ENCODE measurements at regions of chr9 and their contacts with region 1.

Region 1: DNA sequence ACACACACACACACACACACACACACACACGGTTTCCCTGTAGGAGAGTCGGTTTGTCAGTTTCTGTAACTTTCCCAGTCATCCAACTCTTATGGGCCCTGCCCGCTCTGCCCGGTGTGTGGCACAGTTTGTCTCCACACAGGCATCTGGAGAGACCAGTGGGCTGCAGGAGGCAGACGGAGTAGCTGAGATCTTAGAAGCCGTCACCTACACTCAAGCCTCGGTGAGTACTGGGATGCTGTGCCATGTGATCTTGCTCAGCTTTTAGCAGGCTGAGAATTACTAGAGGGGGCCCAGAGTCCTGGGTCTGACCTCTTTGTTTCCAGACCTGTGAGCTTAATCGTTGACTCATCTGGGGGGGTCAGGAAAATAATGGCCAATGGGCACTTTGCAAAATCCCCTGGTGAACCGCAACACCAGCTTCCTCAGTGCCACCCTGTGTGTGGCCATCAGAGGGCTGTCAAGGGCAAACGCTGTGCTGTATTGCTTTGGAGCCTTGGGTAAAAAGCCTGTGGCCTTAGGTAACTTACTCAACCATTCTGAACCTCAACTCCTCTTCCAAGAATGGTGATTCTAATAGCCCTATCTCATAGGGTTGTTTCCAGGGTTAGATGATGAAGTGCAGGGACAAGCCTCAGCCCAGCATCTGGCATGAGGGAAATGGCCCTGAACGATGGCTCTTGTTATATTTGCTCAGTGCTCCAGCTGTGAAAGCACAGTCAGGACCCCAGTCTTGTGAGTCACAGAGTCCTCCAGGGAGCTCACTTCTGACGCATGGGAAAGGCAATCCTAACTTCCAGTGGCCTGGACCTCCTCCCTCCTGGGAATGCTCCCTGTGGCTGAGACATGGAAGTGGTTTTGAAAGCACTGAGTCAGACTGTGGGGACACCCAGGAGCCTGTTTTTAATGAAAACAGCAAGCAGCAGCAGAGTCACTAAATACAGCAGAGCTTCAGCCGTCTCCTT is 45.6 kb downstream of the COL15A1 start:
- DNase-seq: no peak
- H3K4me3 ChIP-seq: no peak overlapping the region
- H3K27ac ChIP-seq: no peak overlapping the region
- H3K4me1 ChIP-seq: no peaks in the 10 kb centered on the region
- H3K27me3 ChIP-seq: no peaks in the 10 kb centered on the region
- CTCF ChIP-seq: peak; percentile 18 to 48 (median 41); a peak in 2 of 4 replicates
- EP300 ChIP-seq: no peak
- POLR2A ChIP-seq: no peak
- RAD21 ChIP-seq: peak; percentile 27 to 53; a peak in 3 of 4 replicates

Region 2: GRCh38 chr9:98860871-98861293 is 128.4 kb before region 1 on chr9:
- CTCF ChIA-PET with region 1: interaction called, 13 read pairs
- POLR2A ChIA-PET with region 1: no interaction called
- DNase-seq: no peak
- H3K4me3 ChIP-seq: no peak overlapping the region
- H3K27ac ChIP-seq: no peak overlapping the region
- H3K4me1 ChIP-seq: no peaks in the 10 kb centered on the region
- H3K27me3 ChIP-seq: no peaks in the 10 kb centered on the region
- CTCF ChIP-seq: peak in 2 of 3 experiments; percentile 20 to 37; a peak in 2 of 4 replicates
- EP300 ChIP-seq: no peak
- POLR2A ChIP-seq: no peak
- RAD21 ChIP-seq: peak; percentile 68 to 73

Region 3: GRCh38 chr9:98944057-98944733 is 45.1 kb before region 1 on chr9:
- CTCF ChIA-PET with region 1: no interaction called
- POLR2A ChIA-PET with region 1: no interaction called
- DNase-seq: peak in 1 of 2 experiments; percentile 67
- H3K4me3 ChIP-seq: peak overlapping the region; percentile 40 to 70 (median 66)
- H3K27ac ChIP-seq: no peak overlapping the region
- H3K4me1 ChIP-seq: peaks cover 4 to 9% (median 4%) of the 10 kb centered on the region in 4 experiments; a peak in 5 of 7 replicates
- H3K27me3 ChIP-seq: peaks cover 22 to 46% (median 41%) of the 10 kb centered on the region in 4 experiments
- CTCF ChIP-seq: no peak
- EP300 ChIP-seq: no peak
- POLR2A ChIP-seq: no peak
- RAD21 ChIP-seq: no peak

Measured in H1 (cell line).